Natural killer cell (primary cell): ENCODE measurements at regions of chr19 and their contacts with region 1.

Region 1: GRCh38 chr19:29263305-29264135 is 50.6 kb upstream of the UQCRFS1 start:
- DNase-seq: peak; percentile 68 to 78
- ATAC-seq: peak; percentile 90 to 95 (median 92)
- H3K4me3 ChIP-seq: no peak overlapping the region
- H3K4me3 Mint-ChIP-seq: peak overlapping the region; percentile 69
- H3K27ac ChIP-seq: no peak overlapping the region
- H3K27ac Mint-ChIP-seq: peak overlapping the region in 1 of 2 donors; percentile 88
- H3K4me1 ChIP-seq: peaks cover 15% of the 10 kb centered on the region
- H3K4me1 Mint-ChIP-seq: peaks cover 17 to 30% of the 10 kb centered on the region in 2 donors
- H3K27me3 ChIP-seq: no peaks in the 10 kb centered on the region
- H3K27me3 Mint-ChIP-seq: peaks cover 11 to 14% of the 10 kb centered on the region in 2 donors
- CTCF ChIP-seq: peak; percentile 90

Region 2: DNA sequence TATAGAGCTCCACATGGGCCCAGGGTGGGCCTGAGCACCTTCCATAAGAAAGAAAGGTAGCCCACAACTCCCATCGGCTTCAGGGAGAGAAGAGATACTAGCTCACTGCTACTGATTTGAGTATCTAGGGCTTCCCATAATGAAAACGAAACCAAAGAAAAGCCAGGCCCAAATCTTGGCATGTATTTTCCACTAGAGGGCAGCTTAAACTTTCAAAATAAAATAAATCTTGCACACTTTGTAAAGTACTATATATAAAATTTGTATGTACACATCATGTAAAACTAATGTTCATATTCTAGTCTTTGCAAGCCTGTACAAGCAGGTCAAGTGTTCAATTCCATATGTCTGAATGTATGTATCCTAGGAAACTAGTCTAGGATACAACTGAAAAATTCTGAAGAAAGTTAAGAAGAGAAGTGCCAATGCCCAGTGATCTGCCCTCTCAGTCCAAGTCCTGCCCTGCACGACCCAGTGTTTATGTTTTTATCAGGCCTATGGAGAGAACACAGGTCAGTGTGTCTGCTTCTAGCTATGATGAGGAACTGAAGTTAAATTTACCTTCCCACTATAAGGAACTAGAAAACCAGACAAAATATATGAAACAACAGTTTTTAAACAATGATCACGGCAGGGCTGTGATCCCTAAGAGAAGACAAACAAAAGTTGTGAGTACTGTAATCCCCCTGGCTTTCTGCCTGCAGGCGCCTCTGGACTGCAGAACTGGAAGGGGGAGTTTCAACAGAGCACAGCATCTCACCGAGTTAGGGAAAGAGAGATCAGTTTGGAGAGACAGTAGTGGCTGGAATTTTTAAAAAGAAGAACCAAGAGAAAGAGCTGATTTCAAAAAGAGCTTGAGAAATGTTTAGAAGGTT is 526.3 kb before region 1 on chr19:
- intact Hi-C with region 1: loop called (anchors 1 kb)
- DNase-seq: peak in 1 of 2 donors; percentile 54
- ATAC-seq: peak; percentile 55 to 75 (median 58)
- H3K4me3 ChIP-seq: no peak overlapping the region
- H3K4me3 Mint-ChIP-seq: no peak overlapping the region
- H3K27ac ChIP-seq: peak overlapping the region; percentile 3
- H3K27ac Mint-ChIP-seq: peak overlapping the region in 1 of 2 donors; percentile 58
- H3K4me1 ChIP-seq: peaks cover 4% of the 10 kb centered on the region
- H3K4me1 Mint-ChIP-seq: peaks cover 11 to 12% of the 10 kb centered on the region in 2 donors
- H3K27me3 ChIP-seq: no peaks in the 10 kb centered on the region
- H3K27me3 Mint-ChIP-seq: peaks cover 2 to 20% of the 10 kb centered on the region in 2 donors
- CTCF ChIP-seq: peak; percentile 73

Region 3: DNA sequence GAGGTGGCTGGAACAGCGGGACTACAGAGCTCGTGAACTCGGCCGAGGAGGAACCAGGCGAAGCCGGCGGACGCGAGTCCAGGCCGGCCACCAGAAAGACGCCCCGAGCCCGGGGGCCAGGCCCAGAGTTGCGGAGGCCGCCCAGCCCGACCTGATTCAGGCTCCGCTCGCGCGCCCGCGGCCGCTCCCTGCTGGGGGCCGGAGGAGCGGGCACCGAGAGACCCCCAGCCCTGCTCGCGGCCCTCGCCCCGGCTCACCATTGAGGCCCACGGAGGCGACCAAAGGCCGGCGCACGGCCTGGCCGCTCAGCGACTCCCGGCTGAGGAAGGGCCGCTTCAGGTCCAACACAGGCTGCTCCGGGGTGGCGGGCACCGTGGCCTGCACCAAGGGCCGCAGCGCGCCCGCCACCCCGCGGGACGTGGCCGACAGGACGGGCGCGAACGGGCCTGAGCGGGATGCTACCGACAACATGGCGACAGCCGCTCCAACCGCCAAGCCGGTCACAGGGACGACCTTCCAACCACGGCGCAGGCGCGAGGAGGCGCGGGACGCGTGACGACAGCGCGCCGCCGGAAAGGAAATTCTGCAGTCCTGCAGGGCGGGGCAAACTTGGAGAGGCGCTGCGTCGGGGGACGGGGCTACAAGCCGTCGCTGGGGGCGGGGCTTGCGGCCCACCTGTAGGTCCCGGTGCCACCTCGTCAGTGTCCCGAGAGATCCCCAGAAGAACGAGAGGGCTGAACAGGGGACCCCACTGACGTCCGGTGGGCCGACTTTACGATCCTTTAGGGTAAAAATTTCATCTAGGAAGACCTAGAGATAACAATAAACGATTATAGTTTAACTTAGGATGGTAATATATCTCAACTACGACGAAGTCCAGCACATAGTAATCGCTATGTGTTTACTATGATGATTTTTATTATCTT is 50.6 kb before region 1 on chr19 and contains the start of gene UQCRFS1:
- intact Hi-C with region 1: loop called (anchors 2 kb)
- DNase-seq: peak; percentile 92 to 97
- ATAC-seq: peak; percentile 92 to 96 (median 94)
- H3K4me3 ChIP-seq: peak within 1 kb of the TSS; percentile 58
- H3K4me3 Mint-ChIP-seq: peak within 1 kb of the TSS; percentile 91
- H3K27ac ChIP-seq: peak within 1 kb of the TSS; percentile 71
- H3K27ac Mint-ChIP-seq: peak within 1 kb of the TSS; percentile 88 to 89
- H3K4me1 ChIP-seq: peaks cover 9% of the 10 kb centered on the region
- H3K4me1 Mint-ChIP-seq: peaks cover 48 to 49% of the 10 kb centered on the region in 2 donors
- H3K27me3 ChIP-seq: no peaks in the 10 kb centered on the region
- H3K27me3 Mint-ChIP-seq: peaks cover 6 to 12% of the 10 kb centered on the region in 2 donors
- CTCF ChIP-seq: no peak
- total RNA-seq, gene UQCRFS1: 21.8 to 26.8 (median 23.9) TPM

Region 4: DNA sequence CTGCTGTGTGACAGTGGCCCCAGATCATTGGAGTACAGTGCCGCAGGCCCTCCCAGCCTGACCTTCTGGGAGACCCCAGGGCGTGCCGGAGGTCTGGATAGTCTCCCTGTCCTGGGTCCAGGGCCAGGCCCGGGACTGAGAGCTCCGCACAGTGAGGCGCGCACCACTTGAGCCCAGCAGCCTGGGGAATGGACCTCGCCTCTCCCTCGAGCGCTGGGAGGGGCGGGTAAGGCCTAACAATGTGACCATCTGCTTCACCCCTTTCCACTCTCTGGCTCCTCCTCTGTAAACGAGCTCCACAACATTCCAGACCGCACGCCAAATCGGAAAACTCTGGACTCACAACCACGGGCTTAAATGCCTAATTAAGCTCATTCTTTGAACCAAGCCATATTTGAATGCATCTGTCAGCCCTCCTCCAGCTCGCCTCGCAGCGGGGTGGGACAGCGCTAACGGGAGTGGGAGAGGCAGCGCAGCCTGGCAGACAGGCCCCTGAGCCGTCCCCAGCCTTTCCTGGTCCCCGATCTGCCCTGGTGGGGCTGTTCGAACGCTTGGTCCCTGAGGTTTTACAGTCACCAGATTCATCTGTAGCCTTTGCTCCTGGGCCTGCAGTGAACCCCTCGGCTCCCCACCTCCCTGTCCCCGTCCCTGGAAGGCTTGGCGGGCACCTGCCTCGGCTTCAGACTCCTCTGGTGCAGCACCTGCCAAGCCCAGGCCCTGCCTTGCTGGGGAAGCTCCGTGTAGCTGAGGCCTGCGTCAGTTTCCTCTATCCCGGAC is 141.6 kb after region 1 on chr19:
- intact Hi-C with region 1: no loop called
- DNase-seq: no peak
- ATAC-seq: no peak
- H3K4me3 ChIP-seq: no peak overlapping the region
- H3K4me3 Mint-ChIP-seq: no peak overlapping the region
- H3K27ac ChIP-seq: no peak overlapping the region
- H3K27ac Mint-ChIP-seq: no peak overlapping the region
- H3K4me1 ChIP-seq: no peaks in the 10 kb centered on the region
- H3K4me1 Mint-ChIP-seq: no peaks in the 10 kb centered on the region
- H3K27me3 ChIP-seq: no peaks in the 10 kb centered on the region
- H3K27me3 Mint-ChIP-seq: peaks cover 0 to 11% of the 10 kb centered on the region in 2 donors
- CTCF ChIP-seq: no peak

Region 5: GRCh38 chr19:29665215-29665825 is 401.8 kb after region 1 on chr19 and contains the start of gene PLEKHF1:
- intact Hi-C with region 1: no loop called
- DNase-seq: peak; percentile 85 to 88
- ATAC-seq: peak; percentile 80 to 93 (median 87)
- H3K4me3 ChIP-seq: peak within 1 kb of the TSS; percentile 88
- H3K4me3 Mint-ChIP-seq: peak within 1 kb of the TSS; percentile 91
- H3K27ac ChIP-seq: peak within 1 kb of the TSS; percentile 61
- H3K27ac Mint-ChIP-seq: peak within 1 kb of the TSS; percentile 94 to 98
- H3K4me1 ChIP-seq: peaks cover 56% of the 10 kb centered on the region
- H3K4me1 Mint-ChIP-seq: peaks cover 46 to 47% of the 10 kb centered on the region in 2 donors
- H3K27me3 ChIP-seq: no peaks in the 10 kb centered on the region
- H3K27me3 Mint-ChIP-seq: no peaks in the 10 kb centered on the region
- CTCF ChIP-seq: no peak
- total RNA-seq, gene PLEKHF1: 53.0 to 81.8 (median 53.8) TPM

Region 6: GRCh38 chr19:29860492-29860891 is 597.0 kb after region 1 on chr19:
- intact Hi-C with region 1: no loop called
- DNase-seq: no peak
- ATAC-seq: no peak
- H3K4me3 ChIP-seq: no peak overlapping the region
- H3K4me3 Mint-ChIP-seq: no peak overlapping the region
- H3K27ac ChIP-seq: no peak overlapping the region
- H3K27ac Mint-ChIP-seq: no peak overlapping the region
- H3K4me1 ChIP-seq: no peaks in the 10 kb centered on the region
- H3K4me1 Mint-ChIP-seq: peaks cover 0 to 5% of the 10 kb centered on the region in 2 donors
- H3K27me3 ChIP-seq: peaks cover 4% of the 10 kb centered on the region
- H3K27me3 Mint-ChIP-seq: peaks cover 13 to 17% of the 10 kb centered on the region in 2 donors
- CTCF ChIP-seq: no peak